Mucosa of descending colon (tissue), 3 donors: ENCODE measurements at regions of chr17 and their contacts with region 1.

Region 1: GRCh38 chr17:8862213-8863056 is 5.0 kb downstream of the PIK3R6 start:
- DNase-seq: no peak
- ATAC-seq: no peak
- H3K4me3 ChIP-seq: no peak overlapping the region
- H3K4me1 ChIP-seq: no peaks in the 10 kb centered on the region
- CTCF ChIP-seq: no peak

Region 2: DNA sequence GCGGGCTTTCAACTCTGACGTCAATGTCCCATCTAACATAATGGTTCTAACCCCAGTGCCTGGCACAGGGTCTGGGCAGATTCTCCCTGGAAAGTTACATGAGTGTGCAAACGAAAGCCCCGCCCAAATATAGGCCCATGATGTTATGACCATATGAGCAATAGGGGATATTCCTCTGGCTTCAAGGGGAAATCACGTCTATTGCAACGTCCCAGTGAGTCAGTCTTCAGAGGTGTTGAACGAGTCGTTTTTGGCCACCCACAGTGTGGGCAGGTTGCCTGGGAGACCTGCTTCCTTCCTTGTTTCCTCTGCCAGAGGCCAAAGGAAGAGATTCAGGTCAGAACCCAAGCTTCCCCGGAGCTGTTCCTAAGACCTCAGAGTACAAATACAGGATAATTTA is 72.8 kb after region 1 on chr17:
- intact Hi-C with region 1: no loop called
- DNase-seq: no peak
- ATAC-seq: peak; percentile 57
- H3K4me3 ChIP-seq: no peak overlapping the region
- H3K4me1 ChIP-seq: no peaks in the 10 kb centered on the region
- CTCF ChIP-seq: no peak

Region 3: GRCh38 chr17:8946476-8946875 is 84.0 kb after region 1 on chr17:
- intact Hi-C with region 1: loop called in 1 of 2 experiments (anchors 5 kb)
- DNase-seq: no peak
- ATAC-seq: no peak
- H3K4me3 ChIP-seq: no peak overlapping the region
- H3K4me1 ChIP-seq: no peaks in the 10 kb centered on the region
- CTCF ChIP-seq: no peak